ENCODE measurements at regions of chr22 and their contacts with region 1.

Region 1: DNA sequence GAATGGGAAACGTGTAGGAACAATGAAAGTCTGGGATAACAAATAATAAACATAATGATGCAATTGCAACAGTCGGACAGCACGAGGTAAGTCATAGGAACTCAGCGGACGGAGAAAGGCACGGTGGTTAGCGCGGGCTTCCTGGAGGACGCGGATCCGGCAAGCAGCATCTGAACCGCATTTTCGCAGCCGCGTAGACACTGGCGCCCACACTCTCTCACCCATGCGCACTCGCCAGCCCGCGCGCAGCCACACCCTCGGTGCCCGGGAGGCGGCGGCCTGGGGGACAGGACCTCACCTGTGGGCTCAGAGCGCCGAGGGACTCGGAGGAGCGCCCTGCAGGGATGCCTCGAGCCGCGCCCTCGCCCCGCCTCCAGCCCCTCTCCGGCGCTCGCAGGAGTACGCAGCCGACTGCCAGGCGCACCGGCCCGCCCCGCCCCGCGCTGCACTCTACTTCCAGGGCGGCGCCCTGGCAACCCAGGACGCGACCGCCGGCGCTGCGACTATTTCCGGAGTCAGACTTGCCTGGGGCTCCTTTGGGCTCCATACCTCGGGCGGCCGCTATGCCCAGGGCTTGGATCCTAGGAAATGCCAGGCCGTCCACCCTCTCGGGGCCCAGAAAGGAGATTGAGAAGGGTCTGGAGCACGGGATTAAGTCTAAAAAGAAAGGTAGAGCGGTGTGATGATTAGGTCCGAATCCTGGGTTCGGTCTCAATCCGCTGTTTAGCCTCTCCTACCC is at the start of gene TTLL1:
- DNase-seq: peak; percentile 88
- H3K4me3 Mint-ChIP-seq: peak within 1 kb of the TSS; percentile 97
- H3K27ac Mint-ChIP-seq: peak within 1 kb of the TSS; percentile 97
- H3K4me1 Mint-ChIP-seq: peaks cover 18% of the 10 kb centered on the region
- H3K27me3 Mint-ChIP-seq: no peaks in the 10 kb centered on the region
- total RNA-seq, gene TTLL1: 2.0 TPM in 2 replicates

Region 2: GRCh38 chr22:42662114-42663021 is 426.8 kb before region 1 on chr22:
- intact Hi-C with region 1: loop called (anchors 10 kb)
- DNase-seq: peak; percentile 68
- H3K4me3 Mint-ChIP-seq: peak overlapping the region; percentile 69
- H3K27ac Mint-ChIP-seq: no peak overlapping the region
- H3K4me1 Mint-ChIP-seq: no peaks in the 10 kb centered on the region
- H3K27me3 Mint-ChIP-seq: peaks cover 13% of the 10 kb centered on the region

Region 3: GRCh38 chr22:42863349-42863961 is 225.7 kb before region 1 on chr22:
- intact Hi-C with region 1: loop called (anchors 1 kb)
- DNase-seq: no peak
- H3K4me3 Mint-ChIP-seq: no peak overlapping the region
- H3K27ac Mint-ChIP-seq: peak overlapping the region; percentile 93
- H3K4me1 Mint-ChIP-seq: peaks cover 13% of the 10 kb centered on the region
- H3K27me3 Mint-ChIP-seq: no peaks in the 10 kb centered on the region

Region 4: GRCh38 chr22:43100211-43100610 is 11.1 kb after region 1 on chr22:
- intact Hi-C with region 1: no loop called
- DNase-seq: no peak
- H3K4me3 Mint-ChIP-seq: no peak overlapping the region
- H3K27ac Mint-ChIP-seq: no peak overlapping the region
- H3K4me1 Mint-ChIP-seq: peaks cover 15% of the 10 kb centered on the region
- H3K27me3 Mint-ChIP-seq: no peaks in the 10 kb centered on the region

Region 5: GRCh38 chr22:43110444-43110926 is 21.3 kb after region 1 on chr22 and contains the start of gene BIK:
- intact Hi-C with region 1: loop called (anchors 2 kb)
- DNase-seq: peak; percentile 23
- H3K4me3 Mint-ChIP-seq: peak within 1 kb of the TSS; percentile 67
- H3K27ac Mint-ChIP-seq: no peak within 1 kb of the TSS
- H3K4me1 Mint-ChIP-seq: no peaks in the 10 kb centered on the region
- H3K27me3 Mint-ChIP-seq: peaks cover 41% of the 10 kb centered on the region
- total RNA-seq, gene BIK: 2.3 and 2.5 TPM in 2 replicates

Region 6: DNA sequence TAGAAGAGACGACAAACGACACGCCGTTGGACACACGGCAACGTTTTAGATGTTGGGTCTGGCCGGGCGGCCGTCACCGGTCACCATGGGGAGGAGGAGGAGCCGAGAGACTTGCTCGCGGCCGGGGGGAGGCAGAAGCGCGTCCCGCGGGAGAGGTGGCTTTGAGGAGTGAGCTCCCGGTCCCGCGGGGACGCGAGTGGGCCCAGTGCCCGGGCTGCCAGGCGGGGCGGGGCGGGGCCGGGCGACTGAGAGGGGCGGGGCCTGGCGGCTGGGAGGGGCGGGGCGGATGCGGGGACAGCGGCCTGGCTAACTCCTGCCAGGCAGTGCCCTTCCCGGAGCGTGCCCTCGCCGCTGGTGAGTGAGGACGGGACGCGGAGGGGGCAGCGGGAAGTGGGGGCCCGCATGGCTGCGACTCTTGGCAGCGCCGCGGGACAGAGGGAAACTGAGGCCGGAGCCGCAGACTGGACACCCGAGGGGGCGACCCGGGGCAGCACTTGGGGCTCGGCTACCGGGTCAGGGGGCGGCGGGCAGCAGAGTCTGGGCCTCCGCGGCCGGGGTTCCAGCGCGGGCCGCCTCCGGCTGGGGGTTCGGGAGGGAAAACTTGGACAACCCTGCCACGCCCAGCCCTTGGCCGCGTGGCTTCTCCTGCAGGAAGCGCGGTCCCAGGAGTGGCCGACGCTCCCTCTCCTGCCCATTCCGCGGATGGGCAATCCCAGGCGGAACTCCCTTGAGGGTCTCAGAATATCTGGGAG is 62.3 kb after region 1 on chr22 and contains the start of gene TSPO:
- intact Hi-C with region 1: loop called (anchors 1 kb)
- DNase-seq: peak; percentile 44
- H3K4me3 Mint-ChIP-seq: peak within 1 kb of the TSS; percentile 94
- H3K27ac Mint-ChIP-seq: peak within 1 kb of the TSS; percentile 91
- H3K4me1 Mint-ChIP-seq: peaks cover 17% of the 10 kb centered on the region
- H3K27me3 Mint-ChIP-seq: no peaks in the 10 kb centered on the region
- total RNA-seq, gene TSPO: 115 and 121 TPM in 2 replicates

Measured in activated T-helper 1 cell treated with anti-CD3 and anti-CD28 coated beads, Interleukin-12 subunit alpha, Interleukin-12 subunit beta, Interleukin-2, Interleukin-4 antibody, amounts not matched to agents 30 ng/mL and 10 ng/mL and 1 ng/mL, durations not matched to agents 14 hours and 24 hours and 36 hours (primary cell).